Right lobe of liver (tissue), 6 donors: ENCODE measurements at regions of chr5 and their contacts with region 1.

Region 1: DNA sequence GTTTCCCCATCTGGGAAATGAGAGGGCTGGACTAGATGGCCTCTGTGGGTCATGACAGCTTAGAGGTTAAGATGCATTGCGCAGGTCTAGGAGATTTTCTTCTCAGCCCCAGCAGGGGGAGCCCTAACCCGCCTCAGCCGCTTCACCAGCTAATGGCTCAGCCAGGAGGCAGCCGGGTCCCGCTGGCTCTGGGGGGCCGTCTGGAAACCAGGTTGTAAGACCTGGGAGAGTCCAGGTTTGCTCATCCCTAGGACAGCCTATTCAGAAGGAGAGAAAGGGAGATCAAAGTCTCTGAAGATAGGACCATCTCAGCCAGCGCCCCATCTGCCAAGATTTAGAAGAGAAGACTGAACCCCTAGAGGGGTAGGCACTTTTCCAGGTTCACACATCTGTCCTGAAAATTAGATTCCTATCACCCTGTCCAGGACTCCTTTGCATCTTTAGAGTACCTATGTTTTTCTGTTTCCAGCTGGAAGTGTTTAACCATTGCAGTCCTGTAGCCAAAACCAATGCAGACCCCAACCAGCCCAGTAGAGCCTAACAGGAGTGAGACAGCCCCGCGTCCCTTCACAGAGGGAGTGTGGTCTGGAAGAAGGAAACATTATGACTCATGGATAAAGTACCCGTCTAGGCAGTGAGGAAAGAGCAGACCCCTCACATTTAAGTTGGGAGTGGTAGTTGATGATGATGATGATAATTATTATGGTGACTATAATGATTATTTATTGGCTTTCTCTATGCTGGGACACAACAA is 27.5 kb downstream of the SPARC start:
- DNase-seq: peak; percentile 80 to 85 (median 83)
- ATAC-seq: peak; percentile 92 to 94 (median 93)
- H3K4me3 ChIP-seq: no peak overlapping the region
- H3K27ac ChIP-seq: no peak overlapping the region
- H3K4me1 ChIP-seq: peaks cover 0 to 9% (median 0%) of the 10 kb centered on the region in 4 donors
- H3K27me3 ChIP-seq: no peaks in the 10 kb centered on the region
- CTCF ChIP-seq: peak; percentile 75 to 87 (median 86)
- POLR2A ChIP-seq: no peak

Region 2: DNA sequence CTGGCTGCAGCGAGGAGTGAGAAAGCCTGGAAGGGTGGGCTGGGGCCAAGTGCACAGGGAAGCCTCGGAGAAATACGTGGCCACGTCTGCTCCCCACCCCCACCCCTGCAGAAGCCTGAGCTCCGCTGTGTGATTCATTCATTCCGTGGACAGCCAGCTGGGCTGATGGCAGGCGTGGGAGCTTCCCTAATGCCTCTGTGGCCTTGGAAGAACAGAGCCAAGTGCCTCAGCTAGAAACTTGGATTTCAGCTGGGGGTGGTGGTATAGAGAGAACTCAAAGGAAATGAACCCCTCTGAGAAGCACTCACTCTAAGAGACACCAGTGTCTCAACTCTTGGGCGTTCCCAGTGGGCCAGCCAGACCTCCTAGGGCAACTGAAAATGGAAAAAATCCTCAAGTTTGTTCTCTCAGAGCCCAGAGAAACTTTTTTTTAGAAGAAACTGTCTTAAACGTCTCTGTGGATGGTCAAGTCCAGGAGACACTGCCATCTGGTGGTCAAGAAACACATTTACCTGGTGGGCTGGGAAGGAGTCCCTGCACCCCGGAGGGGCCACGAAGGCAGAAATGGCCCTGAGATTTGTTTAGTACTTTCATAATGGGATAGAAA is 81.3 kb after region 1 on chr5:
- intact Hi-C with region 1: loop called (anchors 10 kb)
- DNase-seq: no peak
- ATAC-seq: peak; percentile 49 to 66 (median 54)
- H3K4me3 ChIP-seq: no peak overlapping the region
- H3K27ac ChIP-seq: peak overlapping the region in 1 of 3 donors; percentile 54
- H3K4me1 ChIP-seq: peaks cover 0 to 5% (median 0%) of the 10 kb centered on the region in 4 donors
- H3K27me3 ChIP-seq: no peaks in the 10 kb centered on the region
- CTCF ChIP-seq: peak; percentile 77 to 88 (median 86)
- POLR2A ChIP-seq: no peak